HepG2 (cell line): ENCODE measurements at regions of chr12 and their contacts with region 1.

Region 1: DNA sequence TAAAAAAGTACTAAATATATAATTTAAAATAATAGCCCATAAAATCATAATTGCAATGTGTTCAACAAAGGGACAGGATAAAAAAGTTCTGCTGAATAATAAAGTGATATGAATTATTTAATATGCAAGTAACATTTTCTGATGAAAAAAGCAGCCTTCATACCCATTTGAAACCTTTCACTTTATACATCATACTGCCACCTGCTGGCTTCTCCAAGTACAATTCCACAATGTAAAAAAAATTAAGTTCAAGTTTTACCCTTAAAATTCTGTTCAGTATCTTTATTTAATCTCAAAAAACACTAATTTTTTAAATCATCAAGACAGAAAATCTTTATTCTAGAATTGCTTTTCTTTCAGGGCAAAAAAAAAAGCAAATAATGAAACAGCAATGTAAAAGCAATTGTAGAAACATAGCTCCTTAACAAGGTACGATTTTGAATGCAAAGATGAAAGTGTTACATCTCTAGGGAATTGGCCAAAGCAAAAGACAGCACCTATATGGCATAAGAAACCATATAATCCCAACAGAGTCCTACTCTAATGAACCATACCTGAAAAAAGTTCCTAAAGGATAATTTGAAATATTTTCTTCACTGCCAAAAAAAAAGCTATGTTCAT is 15.0 kb downstream of the MDM1 start:
- DNase-seq: peak; percentile 35
- ATAC-seq: no peak
- H3K4me3 ChIP-seq: no peak overlapping the region
- H3K27ac ChIP-seq: no peak overlapping the region
- H3K4me1 ChIP-seq: no peaks in the 10 kb centered on the region
- H3K27me3 ChIP-seq: no peaks in the 10 kb centered on the region
- CTCF ChIP-seq: peak; percentile 48
- EP300 ChIP-seq: no peak
- POLR2A ChIP-seq: no peak
- RAD21 ChIP-seq: no peak

Region 2: DNA sequence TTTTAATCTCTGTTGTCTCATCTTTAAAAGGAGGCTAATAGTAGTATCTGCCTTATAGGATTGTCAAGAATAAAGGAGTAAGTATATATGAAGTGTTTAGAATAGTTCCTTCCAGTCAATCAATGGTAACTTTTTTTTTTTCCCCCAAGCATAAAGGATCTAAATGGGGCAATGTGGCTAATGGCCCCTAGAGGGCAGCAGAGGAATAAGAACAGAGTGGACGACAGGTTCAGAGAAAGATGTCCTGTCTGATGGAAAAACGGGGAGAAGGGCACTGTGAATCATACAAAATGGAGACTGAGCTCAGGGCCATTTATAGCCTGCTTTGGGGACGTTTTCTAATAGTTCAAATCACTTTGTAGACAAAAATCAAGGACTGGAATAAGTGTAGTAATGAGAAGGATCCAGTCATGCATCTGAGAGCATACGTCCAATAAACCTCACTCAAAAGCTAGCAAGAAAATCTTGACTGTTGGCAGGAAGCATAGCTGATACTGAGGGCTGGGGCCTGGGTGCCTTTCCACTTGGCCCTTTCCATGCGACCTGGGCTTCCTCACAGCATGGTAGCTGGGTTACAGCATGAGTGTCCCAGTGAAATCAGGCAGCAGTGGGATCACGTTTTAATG is 276.6 kb before region 1 on chr12:
- CTCF ChIA-PET with region 1: interaction called, 6 read pairs
- POLR2A ChIA-PET with region 1: no interaction called
- in situ Hi-C with region 1: loop called (anchors 25 kb)
- intact Hi-C with region 1: no loop called
- DNase-seq: peak; percentile 53
- ATAC-seq: peak; percentile 75
- H3K4me3 ChIP-seq: no peak overlapping the region
- H3K27ac ChIP-seq: no peak overlapping the region
- H3K4me1 ChIP-seq: no peaks in the 10 kb centered on the region
- H3K27me3 ChIP-seq: no peaks in the 10 kb centered on the region; a peak in 1 of 5 replicates
- CTCF ChIP-seq: peak; percentile 75
- EP300 ChIP-seq: no peak
- POLR2A ChIP-seq: no peak
- RAD21 ChIP-seq: no peak

Region 3: DNA sequence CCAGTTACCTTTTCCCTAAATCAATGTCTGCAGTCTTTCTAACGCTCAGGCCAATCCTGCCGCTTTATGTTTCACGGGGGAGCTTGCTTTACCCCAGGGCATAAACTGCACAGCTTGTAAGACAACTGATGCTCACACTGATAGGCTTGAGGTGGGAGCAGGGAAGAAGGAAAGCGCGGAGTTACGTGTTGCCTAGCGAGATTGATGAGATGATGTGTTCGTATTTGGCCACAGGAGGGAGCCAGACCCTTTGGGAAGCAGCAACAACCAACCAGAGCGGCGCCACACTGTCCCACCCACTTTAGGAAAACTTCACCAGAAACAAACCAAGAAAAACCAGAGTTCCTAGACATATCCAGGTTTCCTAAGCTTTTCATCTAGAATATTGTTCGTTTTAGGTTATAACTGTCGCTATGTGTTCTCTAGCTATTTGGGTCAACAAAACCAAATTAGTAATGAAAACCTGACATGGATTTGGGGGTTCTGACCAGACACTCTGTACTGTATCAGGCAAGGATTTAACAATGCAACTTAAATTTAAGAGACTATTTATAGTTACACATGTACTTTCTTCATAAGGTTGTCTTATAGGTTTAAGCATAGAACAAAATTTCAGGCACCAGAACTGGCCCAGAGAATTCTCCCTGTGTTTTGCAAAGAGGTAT is 93.9 kb before region 1 on chr12:
- CTCF ChIA-PET with region 1: interaction called, 36 read pairs
- POLR2A ChIA-PET with region 1: no interaction called
- in situ Hi-C with region 1: loop called (anchors 5 kb)
- intact Hi-C with region 1: loop called (anchors 1 kb)
- DNase-seq: peak; percentile 71
- ATAC-seq: peak; percentile 100
- H3K4me3 ChIP-seq: no peak overlapping the region
- H3K27ac ChIP-seq: no peak overlapping the region
- H3K4me1 ChIP-seq: no peaks in the 10 kb centered on the region
- H3K27me3 ChIP-seq: peaks cover 0 to 6% of the 10 kb centered on the region in 2 experiments; a peak in 1 of 5 replicates
- CTCF ChIP-seq: peak; percentile 94
- EP300 ChIP-seq: no peak
- POLR2A ChIP-seq: no peak
- RAD21 ChIP-seq: peak; percentile 82